Naive thymus-derived CD4-positive, alpha-beta T cell (primary cell): ENCODE measurements at regions of chr12 and their contacts with region 1.

Region 1: DNA sequence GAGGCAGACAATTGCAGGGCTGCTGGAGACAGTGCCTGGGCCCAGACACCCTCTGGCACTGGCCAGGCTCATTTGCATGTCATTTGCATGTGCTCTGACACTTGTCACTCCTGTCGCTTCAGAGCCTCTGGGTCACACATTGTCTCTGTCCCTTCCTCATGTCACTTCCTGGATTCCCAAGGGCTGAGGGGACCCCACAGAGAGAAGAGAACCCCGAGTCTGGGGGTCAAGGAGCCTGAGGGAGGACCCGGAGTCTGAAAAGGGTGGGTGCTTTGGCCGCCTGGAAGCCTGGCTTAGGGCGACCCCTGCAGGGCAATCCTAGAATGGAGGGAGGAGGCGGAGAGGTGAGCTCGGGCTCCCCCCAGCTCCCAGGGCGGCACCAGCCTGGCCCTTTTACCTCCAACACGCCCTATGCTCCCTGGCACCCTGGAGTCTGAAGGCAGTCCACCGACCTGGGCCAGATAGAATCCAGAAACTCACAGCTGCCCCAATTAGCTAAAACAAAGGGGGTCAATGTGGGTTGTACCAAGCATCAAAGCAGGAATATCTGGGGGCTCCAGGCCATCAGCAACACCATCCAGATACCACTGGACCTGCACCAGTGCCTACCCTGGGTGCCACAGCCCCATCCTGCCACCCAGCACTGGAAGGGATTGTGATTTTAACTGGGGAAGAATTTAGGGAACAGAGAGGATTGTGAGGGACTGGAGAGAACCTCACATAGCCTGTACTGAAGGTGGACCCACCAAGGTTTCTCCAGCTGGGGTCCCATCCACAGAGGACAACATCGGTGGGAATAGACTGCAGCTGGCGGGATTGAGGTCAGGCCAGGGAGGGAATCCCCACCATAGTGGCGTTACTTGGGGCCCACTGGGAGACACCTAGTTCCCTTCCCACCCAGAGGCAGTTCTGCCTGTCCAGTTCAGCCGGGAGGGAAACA is 21.8 kb upstream of the KRT78 start:
- DNase-seq: peak; percentile 70 to 94 (median 82)
- ATAC-seq: peak; percentile 79
- H3K4me3 ChIP-seq: no peak overlapping the region
- H3K4me3 Mint-ChIP-seq: peak overlapping the region in 1 of 10 donors; percentile 29
- H3K27ac ChIP-seq: no peak overlapping the region
- H3K27ac Mint-ChIP-seq: peak overlapping the region in 8 of 9 donors; percentile 19 to 95 (median 74)
- H3K4me1 ChIP-seq: peaks cover 0 to 26% of the 10 kb centered on the region in 2 donors
- H3K4me1 Mint-ChIP-seq: peaks cover 29 to 56% (median 47%) of the 10 kb centered on the region in 7 donors
- H3K27me3 ChIP-seq: no peaks in the 10 kb centered on the region
- H3K27me3 Mint-ChIP-seq: peaks cover 0 to 13% (median 0%) of the 10 kb centered on the region in 5 donors

Region 2: GRCh38 chr12:52327052-52327829 is 543.4 kb before region 1 on chr12:
- CTCF ChIA-PET with region 1: interaction called, 6 read pairs
- POLR2A ChIA-PET with region 1: no interaction called
- intact Hi-C with region 1: loop called in 1 of 2 experiments (anchors 2 kb)
- DNase-seq: peak; percentile 42 to 81 (median 72)
- ATAC-seq: peak; percentile 97
- H3K4me3 ChIP-seq: no peak overlapping the region
- H3K4me3 Mint-ChIP-seq: no peak overlapping the region
- H3K27ac ChIP-seq: no peak overlapping the region
- H3K27ac Mint-ChIP-seq: peak overlapping the region in 1 of 9 donors; percentile 1
- H3K4me1 ChIP-seq: peaks cover 0 to 6% of the 10 kb centered on the region in 2 donors
- H3K4me1 Mint-ChIP-seq: peaks cover 0 to 13% (median 6%) of the 10 kb centered on the region in 7 donors
- H3K27me3 ChIP-seq: no peaks in the 10 kb centered on the region
- H3K27me3 Mint-ChIP-seq: peaks cover 1 to 32% (median 19%) of the 10 kb centered on the region in 5 donors

Region 3: GRCh38 chr12:52542157-52542556 is 328.5 kb before region 1 on chr12:
- CTCF ChIA-PET with region 1: interaction called, 4 read pairs
- POLR2A ChIA-PET with region 1: no interaction called
- intact Hi-C with region 1: loop called in 1 of 2 experiments (anchors 1 kb)
- DNase-seq: no peak
- ATAC-seq: no peak
- H3K4me3 ChIP-seq: no peak overlapping the region
- H3K4me3 Mint-ChIP-seq: no peak overlapping the region
- H3K27ac ChIP-seq: no peak overlapping the region
- H3K27ac Mint-ChIP-seq: no peak overlapping the region
- H3K4me1 ChIP-seq: no peaks in the 10 kb centered on the region
- H3K4me1 Mint-ChIP-seq: peaks cover 0 to 7% (median 0%) of the 10 kb centered on the region in 7 donors
- H3K27me3 ChIP-seq: no peaks in the 10 kb centered on the region
- H3K27me3 Mint-ChIP-seq: peaks cover 0 to 8% (median 0%) of the 10 kb centered on the region in 5 donors

Region 4: GRCh38 chr12:52645120-52645761 is 225.4 kb before region 1 on chr12:
- CTCF ChIA-PET with region 1: interaction called, 4 read pairs
- POLR2A ChIA-PET with region 1: interaction called, 3 read pairs
- intact Hi-C with region 1: loop called in 1 of 2 experiments (anchors 1 kb)
- DNase-seq: peak in 7 of 9 donors; percentile 81 to 98 (median 94)
- ATAC-seq: peak; percentile 96
- H3K4me3 ChIP-seq: no peak overlapping the region
- H3K4me3 Mint-ChIP-seq: peak overlapping the region; percentile 72 to 88 (median 83)
- H3K27ac ChIP-seq: peak overlapping the region; percentile 92
- H3K27ac Mint-ChIP-seq: peak overlapping the region; percentile 97 to 100 (median 100)
- H3K4me1 ChIP-seq: peaks cover 28 to 81% of the 10 kb centered on the region in 2 donors
- H3K4me1 Mint-ChIP-seq: peaks cover 68 to 99% (median 94%) of the 10 kb centered on the region in 7 donors
- H3K27me3 ChIP-seq: no peaks in the 10 kb centered on the region
- H3K27me3 Mint-ChIP-seq: peaks cover 0 to 17% (median 0%) of the 10 kb centered on the region in 5 donors

Region 5: DNA sequence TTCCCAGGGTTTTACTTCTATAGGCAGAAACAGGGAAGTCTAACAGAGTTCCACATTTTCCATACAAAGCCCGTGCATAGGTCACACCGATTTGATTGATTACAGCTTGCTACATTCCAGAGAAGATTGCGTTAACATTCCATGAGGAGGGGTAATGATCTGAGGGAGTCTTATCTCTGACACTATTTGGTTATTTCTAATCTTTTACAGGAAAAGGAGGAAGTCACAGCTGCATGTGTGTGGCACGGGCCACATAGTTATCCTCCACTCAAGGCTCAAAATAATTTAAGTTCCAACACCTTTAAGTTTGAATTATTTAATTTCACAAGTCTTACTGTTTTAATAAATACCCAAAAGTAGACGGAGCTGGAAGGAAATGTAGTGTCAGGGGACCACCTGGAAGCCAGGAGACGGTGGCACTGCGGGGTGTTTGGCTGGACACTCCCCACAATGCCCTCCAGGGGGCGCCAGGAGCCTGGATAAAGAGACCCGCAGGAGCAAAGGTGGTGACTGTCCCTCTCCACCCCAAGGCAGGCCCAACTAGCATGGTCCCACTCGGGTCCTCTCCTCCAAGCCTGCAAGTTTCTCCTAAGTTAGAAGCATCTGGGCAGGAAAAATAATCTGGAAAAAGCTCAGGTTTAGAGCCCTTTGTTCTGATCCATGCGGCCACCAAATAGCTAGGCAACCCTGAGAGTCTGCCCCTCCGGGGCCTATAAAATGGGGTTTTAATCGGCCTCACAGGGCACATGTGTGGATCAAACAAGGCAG is 14.1 kb after region 1 on chr12:
- CTCF ChIA-PET with region 1: interaction called, 28 read pairs
- POLR2A ChIA-PET with region 1: interaction called, 5 read pairs
- intact Hi-C with region 1: loop called in 1 of 2 experiments (anchors 1 kb)
- DNase-seq: peak; percentile 59 to 85 (median 76)
- ATAC-seq: peak; percentile 87
- H3K4me3 ChIP-seq: no peak overlapping the region
- H3K4me3 Mint-ChIP-seq: no peak overlapping the region
- H3K27ac ChIP-seq: no peak overlapping the region
- H3K27ac Mint-ChIP-seq: no peak overlapping the region
- H3K4me1 ChIP-seq: peaks cover 5 to 6% of the 10 kb centered on the region in 2 donors
- H3K4me1 Mint-ChIP-seq: peaks cover 0 to 7% (median 5%) of the 10 kb centered on the region in 7 donors
- H3K27me3 ChIP-seq: peaks cover 0 to 3% of the 10 kb centered on the region in 2 donors
- H3K27me3 Mint-ChIP-seq: peaks cover 0 to 22% (median 8%) of the 10 kb centered on the region in 5 donors

Region 6: GRCh38 chr12:52992699-52993557 is 122.3 kb after region 1 on chr12:
- CTCF ChIA-PET with region 1: no interaction called
- POLR2A ChIA-PET with region 1: no interaction called
- intact Hi-C with region 1: no loop called
- DNase-seq: no peak
- ATAC-seq: no peak
- H3K4me3 ChIP-seq: no peak overlapping the region
- H3K4me3 Mint-ChIP-seq: no peak overlapping the region
- H3K27ac ChIP-seq: no peak overlapping the region
- H3K27ac Mint-ChIP-seq: peak overlapping the region in 1 of 9 donors; percentile 49
- H3K4me1 ChIP-seq: no peaks in the 10 kb centered on the region
- H3K4me1 Mint-ChIP-seq: no peaks in the 10 kb centered on the region
- H3K27me3 ChIP-seq: no peaks in the 10 kb centered on the region
- H3K27me3 Mint-ChIP-seq: peaks cover 0 to 3% (median 0%) of the 10 kb centered on the region in 5 donors